ENCODE measurements at regions of chr14 and their contacts with region 1.

Region 1: DNA sequence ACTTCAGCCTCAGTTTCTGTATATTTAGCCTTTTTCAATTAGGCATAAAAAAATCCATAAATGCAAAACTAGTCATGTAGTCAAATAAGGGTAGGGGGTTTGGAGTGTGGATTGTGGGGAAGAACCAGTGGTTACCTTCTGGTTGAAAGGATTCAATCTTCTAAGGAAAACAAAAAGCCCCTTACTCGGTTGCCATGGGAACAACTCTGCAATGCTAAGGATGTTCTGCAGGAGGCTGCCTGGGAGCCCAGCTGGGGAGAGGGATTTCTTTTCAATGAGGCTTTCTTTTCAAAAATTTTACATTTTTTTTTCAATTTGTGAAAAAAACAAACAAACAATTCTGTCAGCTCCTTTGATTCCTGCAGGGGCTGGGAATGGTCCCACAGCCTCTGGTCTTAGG is 67.2 kb downstream of the SLC8A3 start:
- DNase-seq: no peak
- ATAC-seq: no peak

Region 2: DNA sequence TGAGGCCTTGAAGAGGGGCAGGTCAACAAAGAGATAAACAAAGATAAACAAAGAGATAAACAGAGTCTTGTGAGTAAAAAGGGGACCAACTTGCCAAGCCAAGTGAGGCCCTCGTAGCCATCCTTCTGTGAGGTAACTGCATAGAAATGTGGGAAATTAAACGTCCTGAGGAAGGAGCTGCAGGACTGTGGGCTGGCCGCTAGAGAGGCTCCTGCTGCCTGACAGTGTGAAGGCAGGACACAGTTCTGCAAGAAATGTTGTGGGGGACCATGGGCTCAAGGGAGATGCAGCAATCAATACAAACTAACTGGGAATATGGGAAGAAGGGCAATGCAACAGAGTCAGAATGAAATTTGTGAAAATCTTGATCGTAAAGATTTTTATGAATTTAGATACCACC is 24.7 kb before region 1 on chr14:
- intact Hi-C with region 1: loop called (anchors 1 kb)
- DNase-seq: no peak
- ATAC-seq: no peak

Region 3: GRCh38 chr14:70514168-70515069 is 392.9 kb after region 1 on chr14:
- intact Hi-C with region 1: no loop called
- DNase-seq: no peak
- ATAC-seq: no peak